ENCODE measurements at regions of chr9 and their contacts with region 1.

Region 1: GRCh38 chr9:113669522-113670115 is 206.1 kb downstream of the RGS3 start:
- DNase-seq: peak; percentile 88
- ATAC-seq: no peak
- H3K4me3 ChIP-seq: no peak overlapping the region
- H3K27ac ChIP-seq: no peak overlapping the region
- H3K4me1 ChIP-seq: peaks cover 6% of the 10 kb centered on the region
- H3K27me3 ChIP-seq: no peaks in the 10 kb centered on the region; the same call in 1 of the 2 replicates
- CTCF ChIP-seq: no peak
- POLR2A ChIP-seq: no peak
- RAD21 ChIP-seq: no peak

Region 2: GRCh38 chr9:113427629-113428028 is 242.0 kb before region 1 on chr9:
- CTCF ChIA-PET with region 1: no interaction called
- POLR2A ChIA-PET with region 1: no interaction called
- dilution Hi-C with region 1: no loop called
- in situ Hi-C with region 1: loop called (anchors 10 kb)
- intact Hi-C with region 1: no loop called
- DNase-seq: peak; percentile 49
- ATAC-seq: peak; percentile 57; the same call in 1 of the 2 replicates
- H3K4me3 ChIP-seq: no peak overlapping the region
- H3K27ac ChIP-seq: no peak overlapping the region
- H3K4me1 ChIP-seq: no peaks in the 10 kb centered on the region
- H3K27me3 ChIP-seq: peaks cover 52% of the 10 kb centered on the region
- CTCF ChIP-seq: no peak
- POLR2A ChIP-seq: no peak
- RAD21 ChIP-seq: no peak

Region 3: DNA sequence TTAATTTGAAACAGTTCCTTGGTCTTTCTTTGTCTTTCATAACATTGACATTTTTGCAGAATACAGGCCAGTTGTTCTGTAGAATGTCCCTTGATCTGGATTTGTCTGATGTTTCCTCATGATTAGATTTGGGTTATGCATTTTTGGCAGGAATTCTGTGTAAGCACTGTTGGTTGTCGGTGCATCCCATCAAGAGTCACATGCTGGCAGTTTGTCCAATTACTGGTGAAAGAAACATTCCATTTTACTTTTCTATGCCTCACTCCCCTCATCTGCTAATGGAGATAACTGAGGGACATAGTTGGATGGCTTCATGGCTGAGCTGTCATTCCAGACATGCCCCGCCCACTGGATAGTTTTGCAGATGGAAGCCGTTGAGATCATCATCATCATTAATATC is 198.9 kb after region 1 on chr9:
- CTCF ChIA-PET with region 1: no interaction called
- POLR2A ChIA-PET with region 1: no interaction called
- dilution Hi-C with region 1: no loop called
- in situ Hi-C with region 1: no loop called
- intact Hi-C with region 1: no loop called
- DNase-seq: no peak
- ATAC-seq: no peak
- H3K4me3 ChIP-seq: no peak overlapping the region
- H3K27ac ChIP-seq: no peak overlapping the region
- H3K4me1 ChIP-seq: no peaks in the 10 kb centered on the region
- H3K27me3 ChIP-seq: peaks cover 22% of the 10 kb centered on the region
- CTCF ChIP-seq: no peak
- POLR2A ChIP-seq: no peak
- RAD21 ChIP-seq: no peak

Region 4: GRCh38 chr9:114016629-114017420 is 347.2 kb after region 1 on chr9:
- CTCF ChIA-PET with region 1: no interaction called
- POLR2A ChIA-PET with region 1: no interaction called
- dilution Hi-C with region 1: no loop called
- in situ Hi-C with region 1: no loop called
- intact Hi-C with region 1: no loop called
- DNase-seq: no peak
- ATAC-seq: no peak
- H3K4me3 ChIP-seq: no peak overlapping the region
- H3K27ac ChIP-seq: no peak overlapping the region
- H3K4me1 ChIP-seq: no peaks in the 10 kb centered on the region
- H3K27me3 ChIP-seq: no peaks in the 10 kb centered on the region
- CTCF ChIP-seq: no peak
- POLR2A ChIP-seq: no peak
- RAD21 ChIP-seq: no peak

Measured in IMR-90 (cell line).